ENCODE measurements at regions of chr11 and their contacts with region 1.

Region 1: DNA sequence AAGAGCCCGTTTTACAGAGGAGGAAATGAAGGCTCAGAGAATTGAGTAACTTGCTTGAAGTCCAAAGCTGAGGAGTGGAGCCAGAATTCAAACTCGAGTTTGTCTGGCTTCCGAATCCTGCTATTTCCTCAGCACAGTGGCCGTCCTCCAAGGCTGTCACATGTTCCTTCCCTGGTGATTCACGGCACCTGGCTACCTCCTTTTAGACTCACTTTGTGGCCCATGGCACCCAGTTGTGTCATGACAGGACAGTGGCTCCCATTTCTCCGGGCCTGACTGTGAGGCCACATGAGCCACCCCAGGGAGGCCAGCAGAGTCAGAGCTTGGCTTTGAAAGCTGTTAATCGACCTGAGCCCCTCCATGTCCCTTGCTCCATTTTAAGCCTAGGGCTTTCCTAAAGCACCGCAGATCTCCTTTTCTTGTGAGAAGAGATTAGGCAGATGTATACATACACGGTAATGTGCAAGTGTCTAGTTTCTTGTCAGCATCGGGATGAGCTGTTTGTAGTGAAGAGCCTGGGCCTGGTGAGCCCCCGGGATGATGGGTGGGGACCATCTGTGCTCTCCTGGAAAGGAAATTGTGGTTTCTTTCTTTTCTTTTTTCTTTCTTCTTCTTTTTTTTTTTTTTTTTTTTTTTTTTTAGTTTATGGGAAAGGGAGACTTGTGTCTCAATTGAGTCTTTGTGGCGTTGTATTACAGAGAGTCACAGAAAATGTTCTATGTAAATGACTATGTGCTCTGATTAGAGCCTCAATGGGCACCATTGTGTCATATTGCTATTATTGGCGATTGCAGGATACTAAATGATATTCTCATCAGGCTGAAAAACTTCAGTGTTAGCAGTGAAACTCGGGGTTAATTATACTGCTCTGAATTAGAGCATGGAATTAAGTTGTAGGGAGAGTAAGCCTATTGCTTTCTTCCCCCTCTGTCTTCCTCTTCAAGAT is 54.8 kb downstream of the PTPRJ start:
- DNase-seq: peak in 1 of 3 donors; percentile 55
- H3K4me3 ChIP-seq: peak overlapping the region in 1 of 3 experiments; percentile 10
- H3K4me3 Mint-ChIP-seq: peak overlapping the region in 1 of 2 donors; percentile 64
- H3K27ac ChIP-seq: peak overlapping the region; percentile 46 to 50
- H3K27ac Mint-ChIP-seq: peak overlapping the region; percentile 57 to 83 (median 74)
- H3K4me1 ChIP-seq: peaks cover 66 to 78% of the 10 kb centered on the region in 2 donors
- H3K4me1 Mint-ChIP-seq: peaks cover 79% of the 10 kb centered on the region
- H3K27me3 ChIP-seq: no peaks in the 10 kb centered on the region
- H3K27me3 Mint-ChIP-seq: peaks cover 0 to 3% (median 0%) of the 10 kb centered on the region in 3 donors
- CTCF ChIP-seq: no peak

Region 2: DNA sequence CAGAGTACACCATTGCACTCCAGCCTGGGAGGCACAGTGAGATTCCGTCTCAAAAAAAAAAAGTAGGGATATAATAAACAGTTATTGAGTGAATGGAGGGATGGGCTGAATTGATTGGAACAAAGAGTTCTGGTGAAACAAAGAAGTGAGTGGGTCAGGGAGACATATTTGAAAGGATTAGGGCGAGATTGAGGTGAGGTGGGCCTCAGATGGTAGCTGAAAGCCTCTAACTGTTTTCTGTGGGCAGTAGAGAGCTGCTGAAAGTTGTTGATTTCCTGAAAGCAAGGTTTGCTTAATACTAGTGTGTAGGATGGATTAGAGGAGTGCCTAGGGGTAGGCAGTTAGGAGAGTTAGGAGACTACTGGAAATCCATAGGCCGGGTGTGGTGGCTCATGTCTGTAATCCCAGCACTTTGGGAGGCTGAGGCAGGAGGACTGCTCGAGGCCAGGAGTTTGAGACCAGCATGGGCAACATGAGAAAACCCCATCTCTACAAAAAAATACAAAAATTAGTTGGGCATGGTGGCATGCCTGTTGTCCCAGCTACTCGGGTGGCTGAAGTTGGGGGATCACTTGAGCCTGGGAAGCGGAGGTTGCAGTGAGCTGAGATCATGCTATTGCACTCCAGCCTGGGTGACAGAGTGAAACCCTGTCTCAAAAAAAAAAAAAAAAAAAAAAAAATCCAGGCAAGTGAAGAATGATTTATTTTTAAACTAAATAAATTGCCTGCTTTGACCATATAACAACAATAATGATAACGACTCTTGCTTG is 96.2 kb before region 1 on chr11:
- intact Hi-C with region 1: loop called in 1 of 2 experiments (anchors 5 kb)
- DNase-seq: no peak
- H3K4me3 ChIP-seq: no peak overlapping the region
- H3K4me3 Mint-ChIP-seq: no peak overlapping the region
- H3K27ac ChIP-seq: no peak overlapping the region
- H3K27ac Mint-ChIP-seq: no peak overlapping the region
- H3K4me1 ChIP-seq: peaks cover 44 to 51% of the 10 kb centered on the region in 2 donors
- H3K4me1 Mint-ChIP-seq: peaks cover 51% of the 10 kb centered on the region
- H3K27me3 ChIP-seq: no peaks in the 10 kb centered on the region
- H3K27me3 Mint-ChIP-seq: peaks cover 0 to 2% (median 0%) of the 10 kb centered on the region in 3 donors
- CTCF ChIP-seq: no peak

Region 3: GRCh38 chr11:47980245-47981049 is 54.8 kb before region 1 on chr11 and contains the start of gene PTPRJ:
- intact Hi-C with region 1: loop called (anchors 5 kb)
- DNase-seq: peak in 2 of 3 donors; percentile 46 to 67
- H3K4me3 ChIP-seq: peak within 1 kb of the TSS; percentile 69 to 96 (median 80)
- H3K4me3 Mint-ChIP-seq: peak within 1 kb of the TSS; percentile 94 to 98
- H3K27ac ChIP-seq: peak within 1 kb of the TSS; percentile 71 to 76
- H3K27ac Mint-ChIP-seq: peak within 1 kb of the TSS in 6 of 7 donors; percentile 6 to 96 (median 79)
- H3K4me1 ChIP-seq: peaks cover 48 to 59% of the 10 kb centered on the region in 2 donors
- H3K4me1 Mint-ChIP-seq: peaks cover 55% of the 10 kb centered on the region
- H3K27me3 ChIP-seq: peaks cover 0 to 7% of the 10 kb centered on the region in 2 donors
- H3K27me3 Mint-ChIP-seq: peaks cover 0 to 11% (median 7%) of the 10 kb centered on the region in 3 donors
- CTCF ChIP-seq: no peak
- polyA plus RNA-seq, gene PTPRJ: 10.0 to 36.4 (median 14.6) TPM

Region 4: DNA sequence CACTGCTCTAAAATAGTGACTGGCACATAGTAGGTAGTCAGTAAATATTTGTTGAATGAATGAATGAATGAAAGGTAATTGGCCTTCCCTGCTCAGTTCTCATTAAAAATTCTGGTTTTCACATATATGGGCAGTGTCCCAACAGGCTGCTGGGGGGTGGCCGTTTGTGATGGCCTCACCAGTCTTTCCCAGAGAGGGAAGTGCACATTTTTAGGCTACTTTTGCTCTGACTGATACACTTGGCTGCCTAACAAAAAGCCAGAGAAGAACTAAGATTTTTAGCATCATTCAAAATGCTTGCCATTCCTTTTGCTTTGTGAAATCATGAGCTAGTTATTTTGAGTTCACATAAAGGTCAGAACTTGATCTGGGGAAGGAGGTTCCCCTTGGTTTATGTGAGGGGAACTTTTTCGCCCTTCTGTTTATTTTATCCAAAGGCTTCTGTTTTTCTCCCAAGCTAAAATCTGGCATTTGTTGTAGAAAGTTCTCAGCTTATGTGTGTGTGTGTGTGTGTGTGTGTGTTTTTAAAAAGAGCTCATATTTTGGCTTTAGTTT is 28.3 kb after region 1 on chr11:
- intact Hi-C with region 1: loop called in 1 of 2 experiments (anchors 5 kb)
- DNase-seq: peak; percentile 40 to 58 (median 47)
- H3K4me3 ChIP-seq: peak overlapping the region in 1 of 3 experiments; percentile 46
- H3K4me3 Mint-ChIP-seq: peak overlapping the region; percentile 1 to 71
- H3K27ac ChIP-seq: peak overlapping the region; percentile 47 to 62
- H3K27ac Mint-ChIP-seq: peak overlapping the region; percentile 84 to 90 (median 88)
- H3K4me1 ChIP-seq: peaks cover 63 to 80% of the 10 kb centered on the region in 2 donors
- H3K4me1 Mint-ChIP-seq: peaks cover 74% of the 10 kb centered on the region
- H3K27me3 ChIP-seq: no peaks in the 10 kb centered on the region
- H3K27me3 Mint-ChIP-seq: no peaks in the 10 kb centered on the region
- CTCF ChIP-seq: no peak